ENCODE measurements at regions of chr1 and their contacts with region 1.

Region 1: DNA sequence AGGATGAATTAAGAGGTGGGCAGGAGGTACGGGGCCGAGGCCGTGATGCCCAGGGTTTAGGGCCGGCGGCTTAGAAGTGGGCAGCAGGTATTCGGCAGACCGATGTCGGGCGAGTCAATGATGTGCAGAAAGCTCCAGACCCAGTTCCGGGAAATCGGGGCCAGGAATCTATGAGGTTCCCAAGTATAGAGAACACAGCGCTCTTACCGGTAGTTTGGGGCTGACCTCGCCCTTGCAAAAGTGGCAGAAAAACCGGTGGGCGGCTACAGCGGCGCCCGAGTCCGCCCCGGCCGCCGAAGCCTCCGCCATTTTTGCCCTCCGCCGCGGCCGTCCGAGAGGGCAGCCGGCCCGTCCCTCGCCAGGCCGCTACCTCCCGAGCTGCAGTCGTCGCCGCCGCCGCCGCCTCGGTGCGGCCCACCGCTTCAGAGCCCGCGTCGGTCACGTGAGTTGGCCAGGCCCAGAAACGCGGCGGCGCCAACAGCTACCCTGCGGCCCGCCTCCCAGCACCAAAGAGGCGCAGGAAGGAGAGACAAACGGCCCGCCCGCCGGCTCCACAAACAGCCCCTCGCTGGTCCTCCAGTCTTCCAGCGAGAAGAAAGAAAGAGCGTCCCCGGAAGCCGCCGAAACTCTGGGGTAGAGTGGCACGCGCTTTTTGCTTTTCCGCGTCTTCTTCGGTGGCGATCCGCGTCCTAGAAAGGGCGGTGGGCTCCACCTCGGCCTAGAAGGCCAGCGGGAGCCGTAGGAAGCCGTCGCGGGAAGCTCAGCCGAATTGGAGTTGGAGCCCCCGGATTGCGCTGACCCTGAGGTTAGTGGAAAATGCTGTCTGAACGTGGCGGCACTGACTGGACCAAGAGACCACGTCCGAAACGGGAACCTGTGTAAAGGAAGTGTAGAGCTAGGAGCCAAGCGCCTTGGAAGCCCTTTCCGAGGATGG is at the starts of genes POLR3C and RNF115:
- DNase-seq: peak; percentile 81
- H3K4me3 Mint-ChIP-seq: peak within 1 kb of the TSS; percentile 99
- H3K27ac Mint-ChIP-seq: peak within 1 kb of the TSS; percentile 94
- H3K4me1 Mint-ChIP-seq: peaks cover 38% of the 10 kb centered on the region
- H3K27me3 Mint-ChIP-seq: no peaks in the 10 kb centered on the region
- total RNA-seq, gene POLR3C: 44.5 and 47.2 TPM in 2 replicates
- total RNA-seq, gene RNF115: 18.8 and 20.0 TPM in 2 replicates

Region 2: DNA sequence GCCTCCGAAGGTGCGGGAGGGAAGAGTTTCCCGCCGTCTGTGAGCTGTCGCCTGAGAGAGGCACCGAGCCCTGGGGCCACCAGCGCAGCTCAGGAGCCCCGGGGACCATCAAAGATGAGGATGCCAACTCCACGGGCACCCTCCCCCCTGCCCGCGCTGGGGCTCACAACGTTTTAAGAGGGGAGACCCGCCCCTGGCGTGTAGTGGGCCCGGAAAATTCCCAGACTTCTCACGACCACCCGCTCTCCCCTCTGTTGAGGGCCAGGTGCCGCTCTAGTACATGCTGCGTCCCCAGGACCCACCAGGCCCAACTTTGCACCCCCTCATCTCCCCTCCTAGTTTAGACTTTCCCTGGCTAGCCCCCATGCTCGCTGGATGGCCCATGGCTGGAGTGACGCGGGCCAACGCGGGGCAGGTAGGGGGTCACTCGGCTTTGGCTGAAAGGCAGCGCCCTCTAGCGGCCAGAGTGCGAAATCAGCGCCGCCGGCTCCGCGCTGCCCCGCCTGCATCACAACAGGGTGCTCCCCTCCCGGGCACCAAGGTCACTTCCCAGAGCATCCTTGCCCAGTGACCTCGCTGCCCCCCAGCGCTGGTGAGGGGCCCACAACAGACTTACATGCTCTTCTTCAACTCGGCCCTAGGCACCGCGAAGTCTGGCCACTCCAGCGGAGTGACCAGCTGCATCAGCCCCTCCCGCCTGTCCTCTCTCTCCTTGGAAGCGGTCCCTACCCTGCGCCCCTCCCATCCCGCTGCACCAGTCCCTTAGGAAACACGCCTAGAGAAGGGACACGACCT is 102.8 kb before region 1 on chr1:
- intact Hi-C with region 1: loop called (anchors 5 kb)
- DNase-seq: peak; percentile 62
- H3K4me3 Mint-ChIP-seq: peak overlapping the region; percentile 72
- H3K27ac Mint-ChIP-seq: no peak overlapping the region
- H3K4me1 Mint-ChIP-seq: peaks cover 23% of the 10 kb centered on the region
- H3K27me3 Mint-ChIP-seq: peaks cover 25% of the 10 kb centered on the region

Region 3: GRCh38 chr1:145773423-145773822 is 50.4 kb before region 1 on chr1:
- intact Hi-C with region 1: loop called (anchors 2 kb)
- DNase-seq: no peak
- H3K4me3 Mint-ChIP-seq: no peak overlapping the region
- H3K27ac Mint-ChIP-seq: no peak overlapping the region
- H3K4me1 Mint-ChIP-seq: peaks cover 9% of the 10 kb centered on the region
- H3K27me3 Mint-ChIP-seq: no peaks in the 10 kb centered on the region

Region 4: DNA sequence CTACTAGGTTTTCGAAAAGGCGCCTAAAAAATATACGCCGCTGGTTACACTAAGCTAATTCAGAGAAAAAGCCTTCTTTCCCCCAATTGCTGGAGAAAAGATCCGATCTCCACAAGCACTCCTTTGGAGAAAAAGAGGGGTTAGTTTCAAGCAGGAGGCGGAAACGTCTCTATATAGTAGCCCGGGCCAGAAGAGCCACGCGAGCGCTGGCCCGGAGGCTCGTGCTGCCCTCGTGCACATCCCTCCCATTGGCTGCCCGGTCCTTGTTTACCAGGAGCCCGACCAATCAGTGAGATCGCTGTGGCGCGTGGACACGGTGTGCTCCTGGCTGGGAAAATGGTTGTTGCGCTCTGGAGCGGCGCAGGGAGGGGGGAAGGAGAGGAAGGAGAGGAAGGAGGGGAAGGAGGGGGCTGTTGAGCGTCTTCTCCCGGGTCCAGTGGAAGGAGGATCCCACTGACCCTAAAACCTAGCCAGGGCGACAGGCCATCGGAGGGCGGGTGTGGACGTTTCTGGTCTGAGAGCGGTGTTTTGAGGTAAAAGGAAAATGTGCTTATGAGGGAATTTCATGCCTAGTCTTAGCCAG is 172.7 kb after region 1 on chr1 and contains the start of gene TXNIP:
- intact Hi-C with region 1: no loop called
- DNase-seq: peak; percentile 92
- H3K4me3 Mint-ChIP-seq: peak within 1 kb of the TSS; percentile 94
- H3K27ac Mint-ChIP-seq: peak within 1 kb of the TSS; percentile 99
- H3K4me1 Mint-ChIP-seq: peaks cover 65% of the 10 kb centered on the region
- H3K27me3 Mint-ChIP-seq: no peaks in the 10 kb centered on the region
- total RNA-seq, gene TXNIP: 107 and 108 TPM in 2 replicates